Ovary (tissue), 10 donors: ENCODE measurements at regions of chr11 and their contacts with region 1.

Region 1: DNA sequence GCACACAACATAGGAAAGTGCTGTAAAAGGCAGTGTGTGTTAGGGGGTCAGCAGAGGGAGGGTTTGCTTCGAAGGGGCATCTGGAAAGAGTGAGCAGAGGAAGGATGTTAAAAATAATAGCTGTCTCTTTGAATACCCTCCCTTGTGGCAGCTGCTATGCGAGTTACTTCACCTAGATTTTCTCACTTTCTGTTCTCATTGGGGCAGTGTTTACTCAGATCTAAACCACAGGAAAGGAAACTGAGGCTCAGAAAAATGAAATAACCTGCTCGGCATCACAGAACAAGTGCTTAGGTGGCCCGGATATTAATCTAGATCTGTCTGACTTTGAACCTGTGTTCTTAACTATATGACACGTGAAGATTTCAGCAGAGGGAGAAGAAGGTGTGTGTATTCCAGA is 125.3 kb downstream of the C11orf91 start:
- DNase-seq: no peak
- H3K4me3 ChIP-seq: no peak overlapping the region
- H3K27ac ChIP-seq: no peak overlapping the region
- H3K4me1 ChIP-seq: no peaks in the 10 kb centered on the region
- H3K27me3 ChIP-seq: no peaks in the 10 kb centered on the region
- CTCF ChIP-seq: no peak
- EP300 ChIP-seq: no peak
- POLR2A ChIP-seq: no peak

Region 2: GRCh38 chr11:32829680-32830412 is 745.5 kb before region 1 on chr11 and contains the start of gene PRRG4:
- intact Hi-C with region 1: loop called in 1 of 4 experiments (anchors 10 kb)
- DNase-seq: peak in 4 of 5 donors; percentile 18 to 57 (median 26)
- H3K4me3 ChIP-seq: peak within 1 kb of the TSS; percentile 43
- H3K27ac ChIP-seq: no peak within 1 kb of the TSS
- H3K4me1 ChIP-seq: no peaks in the 10 kb centered on the region
- H3K27me3 ChIP-seq: no peaks in the 10 kb centered on the region
- CTCF ChIP-seq: no peak
- EP300 ChIP-seq: no peak
- POLR2A ChIP-seq: no peak
- total RNA-seq, gene PRRG4: 0.20 to 6.5 (median 0.48) TPM

Region 3: DNA sequence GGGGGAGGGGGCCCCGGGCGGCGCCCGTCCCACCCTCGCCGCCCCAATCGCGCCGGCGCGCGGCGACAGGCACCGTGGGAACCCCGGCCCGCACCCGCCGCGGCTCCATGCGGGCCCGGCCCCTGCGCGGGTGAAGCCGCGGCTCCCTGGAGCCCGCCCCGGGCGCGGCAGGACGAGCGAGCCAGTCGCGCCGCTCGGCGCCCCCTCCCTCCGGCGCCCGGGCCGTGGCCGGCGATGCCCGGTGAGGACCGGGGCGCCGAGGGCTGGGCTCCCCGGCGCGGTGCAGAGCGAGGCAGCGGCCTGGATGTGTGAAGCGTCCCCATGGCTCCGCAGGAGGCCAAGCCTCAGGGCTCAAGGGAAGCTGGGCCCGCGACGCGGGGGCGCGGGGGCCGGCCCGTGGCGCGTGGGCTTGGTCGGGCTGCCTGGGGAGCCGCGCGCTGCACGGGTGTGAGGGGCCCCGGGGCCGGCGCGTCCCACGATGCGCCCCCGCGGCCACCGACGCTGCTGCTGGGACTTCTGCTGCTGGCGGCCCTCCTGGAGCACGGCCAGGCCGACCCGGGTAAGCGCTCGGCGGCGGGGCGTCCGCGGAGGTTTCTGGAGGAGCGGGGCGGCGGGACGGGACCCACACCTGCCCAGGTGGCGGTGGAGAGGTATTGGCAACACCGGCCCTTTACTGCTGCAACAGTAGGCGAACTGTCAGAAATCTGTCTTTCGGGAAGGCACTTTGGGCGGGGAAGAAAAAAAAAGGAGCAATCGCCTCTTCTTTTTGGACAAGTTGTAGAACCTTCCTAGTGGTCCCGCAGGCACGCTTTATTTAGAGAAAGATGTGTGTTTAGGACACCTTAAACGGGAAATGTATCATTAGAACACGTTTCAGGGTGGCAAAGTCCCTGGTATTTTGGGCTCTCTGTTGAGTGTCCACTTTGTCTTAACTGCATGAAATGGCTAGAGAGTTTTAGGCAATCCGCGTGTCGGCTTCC is 198.7 kb before region 1 on chr11:
- intact Hi-C with region 1: no loop called
- DNase-seq: peak in 1 of 5 donors; percentile 33
- H3K4me3 ChIP-seq: peak overlapping the region; percentile 24
- H3K27ac ChIP-seq: no peak overlapping the region
- H3K4me1 ChIP-seq: peaks cover 6% of the 10 kb centered on the region
- H3K27me3 ChIP-seq: no peaks in the 10 kb centered on the region
- CTCF ChIP-seq: no peak
- EP300 ChIP-seq: no peak
- POLR2A ChIP-seq: no peak

Region 4: DNA sequence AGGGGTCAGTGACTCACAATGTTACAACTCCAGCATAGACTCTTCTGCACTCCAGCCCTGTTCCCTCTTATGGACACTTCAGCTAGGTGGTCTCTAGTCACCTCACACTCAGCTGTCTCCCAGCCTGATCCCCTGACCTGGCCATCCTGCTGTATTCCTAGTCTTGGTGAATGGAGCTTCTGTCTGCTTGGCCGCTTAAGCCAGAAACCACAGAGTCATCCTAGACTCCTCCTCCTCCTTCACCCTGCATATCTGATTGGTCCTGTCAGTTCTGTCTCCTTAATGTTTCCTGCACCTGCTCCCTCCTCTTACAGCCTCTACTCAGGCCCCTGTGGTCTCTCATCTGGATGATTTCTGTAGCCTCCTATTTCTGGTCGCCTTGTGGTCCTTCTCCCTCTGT is 173.2 kb before region 1 on chr11:
- intact Hi-C with region 1: no loop called
- DNase-seq: no peak
- H3K4me3 ChIP-seq: no peak overlapping the region
- H3K27ac ChIP-seq: no peak overlapping the region
- H3K4me1 ChIP-seq: no peaks in the 10 kb centered on the region
- H3K27me3 ChIP-seq: no peaks in the 10 kb centered on the region
- CTCF ChIP-seq: no peak
- EP300 ChIP-seq: no peak
- POLR2A ChIP-seq: no peak